GM13976 (cell line): ENCODE measurements at regions of chr9 and their contacts with region 1.

Region 1: GRCh38 chr9:111945216-111945615 is 48.6 kb downstream of the UGCG start:
- DNase-seq: peak; percentile 61
- CTCF ChIP-seq: no peak

Region 2: GRCh38 chr9:111873901-111874300 is 71.3 kb before region 1 on chr9:
- in situ Hi-C with region 1: no loop called
- DNase-seq: no peak
- CTCF ChIP-seq: no peak

Region 3: GRCh38 chr9:112002131-112002846 is 57.1 kb after region 1 on chr9:
- in situ Hi-C with region 1: loop called (anchors 10 kb)
- DNase-seq: no peak
- CTCF ChIP-seq: no peak